ENCODE measurements at regions of chr4 and their contacts with region 1.

Region 1: GRCh38 chr4:177673985-177674489 is 231.8 kb upstream of the AGA start:
- DNase-seq: no peak
- ATAC-seq: no peak
- H3K4me3 ChIP-seq: no peak overlapping the region
- H3K4me3 Mint-ChIP-seq: no peak overlapping the region
- H3K27ac ChIP-seq: no peak overlapping the region
- H3K27ac Mint-ChIP-seq: no peak overlapping the region
- H3K4me1 ChIP-seq: no peaks in the 10 kb centered on the region
- H3K4me1 Mint-ChIP-seq: no peaks in the 10 kb centered on the region
- H3K27me3 ChIP-seq: no peaks in the 10 kb centered on the region
- H3K27me3 Mint-ChIP-seq: no peaks in the 10 kb centered on the region
- CTCF ChIP-seq: no peak

Region 2: GRCh38 chr4:177349188-177349587 is 324.8 kb before region 1 on chr4:
- CTCF ChIA-PET with region 1: no interaction called
- POLR2A ChIA-PET with region 1: no interaction called
- intact Hi-C with region 1: no loop called
- DNase-seq: no peak
- ATAC-seq: no peak
- H3K4me3 ChIP-seq: no peak overlapping the region
- H3K4me3 Mint-ChIP-seq: no peak overlapping the region
- H3K27ac ChIP-seq: no peak overlapping the region
- H3K27ac Mint-ChIP-seq: no peak overlapping the region
- H3K4me1 ChIP-seq: no peaks in the 10 kb centered on the region
- H3K4me1 Mint-ChIP-seq: no peaks in the 10 kb centered on the region
- H3K27me3 ChIP-seq: no peaks in the 10 kb centered on the region
- H3K27me3 Mint-ChIP-seq: no peaks in the 10 kb centered on the region
- CTCF ChIP-seq: no peak

Region 3: GRCh38 chr4:177385576-177386277 is 288.3 kb before region 1 on chr4:
- CTCF ChIA-PET with region 1: no interaction called
- POLR2A ChIA-PET with region 1: no interaction called
- intact Hi-C with region 1: loop called in 1 of 2 experiments (anchors 5 kb)
- DNase-seq: no peak
- ATAC-seq: no peak
- H3K4me3 ChIP-seq: no peak overlapping the region
- H3K4me3 Mint-ChIP-seq: no peak overlapping the region
- H3K27ac ChIP-seq: no peak overlapping the region
- H3K27ac Mint-ChIP-seq: no peak overlapping the region
- H3K4me1 ChIP-seq: no peaks in the 10 kb centered on the region
- H3K4me1 Mint-ChIP-seq: no peaks in the 10 kb centered on the region
- H3K27me3 ChIP-seq: no peaks in the 10 kb centered on the region
- H3K27me3 Mint-ChIP-seq: peaks cover 5% of the 10 kb centered on the region
- CTCF ChIP-seq: no peak